Activated B cell treated with CpG ODN at 0.5 μM for 24 hours (primary cell): ENCODE measurements at regions of chr4 and their contacts with region 1.

Region 1: GRCh38 chr4:54091637-54092404 is 8.1 kb upstream of the GSX2 start:
- DNase-seq: peak; percentile 55
- ATAC-seq: peak; percentile 91
- H3K4me3 Mint-ChIP-seq: peak overlapping the region; percentile 87
- H3K27ac Mint-ChIP-seq: peak overlapping the region; percentile 59
- H3K4me1 Mint-ChIP-seq: peaks cover 33% of the 10 kb centered on the region
- H3K27me3 Mint-ChIP-seq: peaks cover 63% of the 10 kb centered on the region
- CTCF ChIP-seq: no peak

Region 2: DNA sequence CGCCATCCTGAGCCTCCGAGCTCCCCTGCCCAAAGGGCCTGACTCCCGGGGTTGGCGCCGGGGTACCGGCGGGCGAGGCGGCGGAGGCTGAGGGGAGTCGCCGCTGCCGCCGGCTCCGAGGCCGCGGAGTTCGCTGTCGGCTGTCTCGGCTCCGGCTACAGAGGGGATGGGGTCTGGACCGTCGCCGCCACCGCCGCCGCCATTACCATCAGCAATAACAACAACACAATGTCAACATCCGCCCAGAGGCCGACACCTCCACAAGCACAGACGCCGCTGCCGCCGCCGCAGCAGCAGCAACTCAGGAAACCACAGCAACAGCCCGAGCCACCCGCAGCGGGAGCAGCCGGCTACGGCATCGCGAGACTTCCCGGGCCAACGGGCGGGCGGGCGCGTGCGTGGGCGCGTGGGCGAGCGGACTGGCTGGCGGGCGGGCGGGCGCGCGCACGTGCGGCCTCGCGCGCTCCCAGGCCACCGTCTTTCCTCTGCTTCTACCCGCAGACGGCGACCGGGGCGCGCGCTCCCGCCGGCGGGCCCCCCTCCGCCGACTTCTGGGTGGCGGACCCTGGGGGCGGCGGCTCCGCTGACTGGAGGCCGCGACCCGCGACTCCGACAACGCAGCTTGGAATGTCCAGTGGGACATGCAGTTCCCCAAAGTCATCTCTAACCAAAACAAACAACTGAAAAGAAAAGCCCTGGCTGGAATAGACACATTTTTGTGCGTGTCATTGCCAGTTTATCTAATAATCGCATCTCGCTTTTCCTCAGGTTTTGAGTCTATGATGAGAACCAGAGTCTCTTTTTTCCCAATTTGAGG is 27.3 kb before region 1 on chr4 and contains the start of gene CHIC2:
- CTCF ChIA-PET with region 1: no interaction called
- POLR2A ChIA-PET with region 1: no interaction called
- intact Hi-C with region 1: loop called (anchors 1 kb)
- DNase-seq: peak; percentile 95
- ATAC-seq: peak; percentile 90
- H3K4me3 Mint-ChIP-seq: peak within 1 kb of the TSS; percentile 92
- H3K27ac Mint-ChIP-seq: peak within 1 kb of the TSS; percentile 87
- H3K4me1 Mint-ChIP-seq: peaks cover 47% of the 10 kb centered on the region
- H3K27me3 Mint-ChIP-seq: peaks cover 3% of the 10 kb centered on the region
- CTCF ChIP-seq: no peak
- total RNA-seq, gene CHIC2: 17.5 and 21.6 TPM in 2 replicates

Region 3: DNA sequence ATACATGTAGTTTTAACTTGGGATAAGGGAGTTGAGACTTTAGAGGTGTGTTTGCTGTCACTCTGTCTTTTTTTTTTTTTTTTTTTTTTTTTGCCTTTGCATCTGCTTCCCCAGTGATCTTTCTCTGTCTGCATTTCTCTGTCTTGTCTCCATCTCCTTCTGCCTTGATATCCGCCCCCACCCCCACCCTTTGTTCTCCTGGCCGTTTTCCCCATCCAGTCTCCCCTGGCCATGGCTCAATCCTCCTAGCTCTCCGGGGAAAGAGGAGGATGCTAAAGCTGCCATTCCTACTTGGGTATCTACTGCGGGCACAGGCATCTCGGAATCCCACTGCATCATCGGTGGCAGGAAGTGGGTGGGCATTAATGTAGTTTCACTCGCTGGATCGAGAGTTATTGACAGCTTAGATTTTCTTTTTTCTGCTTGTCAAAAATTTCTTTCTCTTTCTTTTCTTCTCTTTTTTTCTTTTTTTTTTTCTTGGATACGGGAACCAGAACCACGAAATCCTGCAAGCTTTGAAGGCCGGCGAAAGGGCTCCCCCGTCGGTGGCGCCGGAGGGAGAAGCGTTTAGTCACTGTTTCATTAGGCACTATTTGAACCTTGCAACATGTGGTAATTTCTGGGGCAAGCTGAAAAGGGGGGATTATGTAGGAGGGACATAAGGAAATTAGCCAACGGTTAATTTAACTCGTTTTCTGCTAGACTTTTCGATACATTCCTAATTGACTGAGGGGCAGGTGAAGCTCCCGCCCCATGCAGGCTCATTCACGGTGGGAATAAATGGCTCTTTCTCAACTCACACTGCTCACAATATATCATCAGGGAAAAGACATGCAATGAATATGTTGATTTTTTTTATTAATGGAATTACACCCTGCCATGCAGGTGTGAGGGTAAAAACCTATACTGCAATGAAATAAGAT is 16.4 kb after region 1 on chr4:
- CTCF ChIA-PET with region 1: no interaction called
- POLR2A ChIA-PET with region 1: interaction called, 4 read pairs
- intact Hi-C with region 1: loop called (anchors 2 kb)
- DNase-seq: no peak
- ATAC-seq: no peak
- H3K4me3 Mint-ChIP-seq: peak overlapping the region; percentile 77
- H3K27ac Mint-ChIP-seq: no peak overlapping the region
- H3K4me1 Mint-ChIP-seq: peaks cover 41% of the 10 kb centered on the region
- H3K27me3 Mint-ChIP-seq: peaks cover 68% of the 10 kb centered on the region
- CTCF ChIP-seq: no peak

Region 4: DNA sequence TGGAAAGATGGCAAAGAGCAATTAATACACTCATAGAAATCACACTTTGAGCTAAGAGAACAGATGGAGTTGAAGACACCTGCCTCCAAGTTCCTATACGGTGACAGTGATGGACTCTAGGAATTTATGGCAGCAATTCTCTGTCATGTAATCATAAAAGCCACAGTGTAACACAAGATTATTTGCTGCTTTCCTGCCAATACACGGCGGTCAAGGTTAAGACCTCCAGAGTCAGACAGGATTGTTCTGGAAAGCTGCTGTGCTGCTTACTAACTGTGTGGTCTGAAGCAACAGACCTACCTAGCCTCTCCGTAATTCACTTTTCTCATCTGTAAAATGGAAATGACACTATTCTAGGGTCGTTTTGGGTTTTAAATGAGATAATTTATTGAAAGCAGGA is 551.4 kb after region 1 on chr4:
- CTCF ChIA-PET with region 1: no interaction called
- POLR2A ChIA-PET with region 1: no interaction called
- intact Hi-C with region 1: no loop called
- DNase-seq: no peak
- ATAC-seq: no peak
- H3K4me3 Mint-ChIP-seq: no peak overlapping the region
- H3K27ac Mint-ChIP-seq: no peak overlapping the region
- H3K4me1 Mint-ChIP-seq: no peaks in the 10 kb centered on the region
- H3K27me3 Mint-ChIP-seq: peaks cover 4% of the 10 kb centered on the region
- CTCF ChIP-seq: no peak